CD8-positive, alpha-beta memory T cell (primary cell): ENCODE measurements at regions of chr11 and their contacts with region 1.

Region 1: GRCh38 chr11:118592616-118593367 is 14.6 kb upstream of the PHLDB1 start:
- DNase-seq: no peak
- H3K4me3 ChIP-seq: no peak overlapping the region
- H3K4me3 Mint-ChIP-seq: no peak overlapping the region
- H3K27ac ChIP-seq: no peak overlapping the region
- H3K27ac Mint-ChIP-seq: peak overlapping the region in 2 of 8 donors; percentile 29 to 32
- H3K4me1 ChIP-seq: peaks cover 9% of the 10 kb centered on the region
- H3K4me1 Mint-ChIP-seq: peaks cover 16 to 25% (median 23%) of the 10 kb centered on the region in 3 donors
- H3K27me3 ChIP-seq: no peaks in the 10 kb centered on the region
- H3K27me3 Mint-ChIP-seq: no peaks in the 10 kb centered on the region

Region 2: DNA sequence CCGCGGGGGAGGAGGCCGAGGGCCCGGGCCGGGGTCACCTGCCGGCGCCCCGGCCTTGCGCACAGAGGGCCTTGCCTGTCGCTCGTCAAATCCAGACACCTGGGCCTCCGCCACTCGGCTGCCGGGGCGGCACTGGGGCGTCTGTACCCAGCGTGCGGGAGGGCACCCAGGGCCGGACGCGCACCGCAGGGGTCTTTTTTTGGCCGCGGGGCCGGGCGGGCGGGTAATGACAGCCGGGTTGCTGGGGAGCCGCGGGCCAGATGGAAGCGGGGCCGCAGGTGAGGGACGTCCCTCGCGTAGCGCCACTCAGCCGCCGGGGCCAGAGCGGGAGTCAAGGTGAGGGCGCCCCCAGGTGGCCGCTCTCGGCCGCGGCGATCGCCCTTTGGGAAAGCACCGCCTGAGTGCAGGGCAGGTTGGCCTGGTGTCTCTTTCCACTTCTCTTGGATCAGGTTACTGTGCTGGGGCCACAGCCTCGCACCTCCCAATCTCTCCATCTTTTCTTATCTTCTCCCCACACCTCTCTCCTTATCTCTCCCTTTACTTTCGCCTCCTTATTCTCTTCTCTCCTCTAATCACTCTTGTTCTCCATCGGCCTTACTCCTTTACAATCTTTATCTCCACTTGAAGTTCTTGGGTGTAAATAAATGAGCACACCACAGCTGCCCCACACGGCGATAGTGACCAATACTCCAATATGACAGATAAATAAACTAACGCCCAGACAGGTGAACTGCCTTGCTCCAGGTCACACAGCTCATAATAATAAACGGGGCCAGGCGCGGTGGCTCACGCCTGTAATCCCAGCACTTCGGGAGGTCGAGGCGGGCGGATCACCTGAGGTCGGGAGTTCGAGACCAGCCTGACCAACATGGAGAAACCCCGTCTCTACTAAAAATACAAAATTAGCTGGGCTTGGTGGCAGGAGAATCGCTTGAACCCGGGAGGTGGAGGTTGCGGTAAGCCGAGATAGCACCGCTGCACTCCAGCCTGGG is 18.3 kb after region 1 on chr11:
- CTCF ChIA-PET with region 1: interaction called, 57 read pairs
- POLR2A ChIA-PET with region 1: interaction called, 6 read pairs
- DNase-seq: peak; percentile 81 to 87 (median 83)
- H3K4me3 ChIP-seq: peak overlapping the region; percentile 43
- H3K4me3 Mint-ChIP-seq: peak overlapping the region; percentile 70 to 86 (median 78)
- H3K27ac ChIP-seq: no peak overlapping the region
- H3K27ac Mint-ChIP-seq: peak overlapping the region in 6 of 8 donors; percentile 2 to 97 (median 82)
- H3K4me1 ChIP-seq: peaks cover 22% of the 10 kb centered on the region
- H3K4me1 Mint-ChIP-seq: peaks cover 21 to 28% (median 23%) of the 10 kb centered on the region in 3 donors
- H3K27me3 ChIP-seq: no peaks in the 10 kb centered on the region
- H3K27me3 Mint-ChIP-seq: peaks cover 0 to 5% of the 10 kb centered on the region in 2 donors